ENCODE measurements at regions of chr6 and their contacts with region 1.

Region 1: DNA sequence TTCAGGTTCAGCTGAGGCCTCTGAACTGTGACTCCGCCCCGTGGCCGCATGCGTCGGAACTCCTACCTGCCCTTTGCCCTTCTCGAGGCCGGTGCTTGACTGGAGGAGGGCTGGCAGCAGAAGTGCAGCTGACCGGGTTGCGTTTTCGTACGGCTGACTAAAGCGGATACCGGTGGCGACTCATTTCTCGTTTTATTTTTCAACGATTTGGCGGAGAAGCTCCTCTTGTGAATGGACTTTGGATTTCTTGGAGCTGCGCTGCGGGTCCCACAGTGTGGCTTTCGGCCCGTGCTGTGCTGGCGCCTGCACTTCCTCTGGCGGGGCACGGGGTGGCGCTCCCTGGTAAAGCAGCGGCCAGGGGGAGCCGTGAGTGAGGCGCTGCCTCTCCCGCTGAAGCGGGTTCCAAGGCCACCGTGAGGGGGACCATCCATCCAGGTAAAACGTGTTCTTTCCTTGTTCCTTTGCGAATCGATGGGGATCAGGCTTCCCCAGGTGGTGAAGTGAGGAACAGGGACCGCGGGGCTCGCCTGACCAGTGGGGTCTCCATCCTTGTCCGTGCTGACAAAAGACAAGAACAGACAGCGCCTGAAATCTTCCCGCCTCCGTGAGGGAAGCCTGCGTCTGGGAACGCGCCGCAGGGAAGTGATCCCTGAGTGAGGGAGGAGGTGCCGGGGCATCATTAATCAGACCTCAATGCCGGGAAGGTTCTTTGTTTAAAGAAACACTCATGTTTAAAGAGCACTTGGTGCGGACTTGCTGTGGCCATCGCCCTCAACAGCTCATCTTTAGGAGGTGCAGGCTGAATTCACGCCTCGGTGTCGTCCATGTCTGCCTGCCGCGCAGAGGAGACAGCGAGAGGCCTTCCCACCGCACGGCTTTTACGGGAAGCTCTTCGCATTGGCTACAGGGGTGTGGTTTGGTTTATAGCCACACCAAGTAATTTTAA is 38.8 kb downstream of the ERMARD start:
- DNase-seq: peak; percentile 62
- H3K4me3 Mint-ChIP-seq: peak overlapping the region; percentile 84
- H3K27ac Mint-ChIP-seq: peak overlapping the region; percentile 34
- H3K4me1 Mint-ChIP-seq: peaks cover 22% of the 10 kb centered on the region
- H3K27me3 Mint-ChIP-seq: peaks cover 24% of the 10 kb centered on the region

Region 2: DNA sequence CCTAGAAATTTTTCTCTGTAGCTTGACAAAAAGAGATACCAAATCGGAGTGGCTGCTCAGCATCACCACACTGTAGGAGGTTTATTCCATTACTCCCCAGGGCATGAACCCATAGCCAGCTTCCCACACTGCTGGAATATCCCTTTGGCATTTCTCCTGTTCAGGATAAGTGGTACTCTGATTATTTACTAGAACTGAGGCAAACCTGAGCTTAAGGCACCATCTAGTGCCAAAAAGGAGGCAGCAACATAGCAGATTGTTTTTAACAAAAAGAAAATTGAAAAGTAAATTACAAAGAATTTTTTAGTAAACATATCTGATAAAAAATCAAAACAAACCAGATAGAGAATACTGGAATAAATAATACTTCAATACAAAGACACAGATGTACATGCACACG is 270.2 kb before region 1 on chr6:
- intact Hi-C with region 1: no loop called
- DNase-seq: no peak
- H3K4me3 Mint-ChIP-seq: no peak overlapping the region
- H3K27ac Mint-ChIP-seq: no peak overlapping the region
- H3K4me1 Mint-ChIP-seq: no peaks in the 10 kb centered on the region
- H3K27me3 Mint-ChIP-seq: peaks cover 9% of the 10 kb centered on the region

Region 3: DNA sequence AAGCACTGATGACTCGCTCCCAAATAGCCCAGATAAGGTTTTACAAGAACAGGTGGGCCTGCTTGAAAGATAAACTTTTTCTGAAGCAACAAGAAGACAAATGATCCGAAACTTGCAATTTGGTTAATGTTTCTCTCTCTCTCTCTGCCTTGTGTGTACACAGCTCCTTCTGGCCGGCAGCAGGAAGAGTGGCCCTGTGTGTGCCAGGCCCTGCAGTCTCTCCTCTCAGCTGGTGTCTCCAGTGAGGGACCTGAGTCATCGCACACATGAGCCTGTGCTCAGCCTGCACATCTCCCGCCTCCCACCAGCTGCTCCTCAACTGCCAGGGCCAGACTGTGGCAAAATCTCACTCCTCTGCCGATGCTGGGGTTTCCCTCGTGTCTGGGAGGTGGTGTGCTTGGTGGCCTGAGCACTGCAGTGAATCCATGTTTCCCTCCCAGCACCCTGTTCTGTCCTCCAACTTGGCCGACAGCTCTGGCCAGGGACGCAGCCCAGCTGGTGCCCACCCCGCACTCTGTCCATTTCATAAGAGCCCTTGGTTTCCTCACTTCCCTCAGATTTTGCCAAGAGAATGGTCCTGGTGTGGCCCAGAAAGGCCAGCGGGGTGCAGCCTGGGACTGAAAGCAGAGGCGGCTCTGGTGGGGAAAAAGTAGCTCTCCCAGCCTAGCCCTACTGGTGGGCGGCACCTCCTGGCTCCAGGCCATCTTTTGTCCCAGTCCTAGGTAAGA is 10.6 kb after region 1 on chr6:
- intact Hi-C with region 1: no loop called
- DNase-seq: no peak
- H3K4me3 Mint-ChIP-seq: no peak overlapping the region
- H3K27ac Mint-ChIP-seq: no peak overlapping the region
- H3K4me1 Mint-ChIP-seq: peaks cover 36% of the 10 kb centered on the region
- H3K27me3 Mint-ChIP-seq: peaks cover 44% of the 10 kb centered on the region

Region 4: GRCh38 chr6:170049641-170050561 is 259.6 kb after region 1 on chr6:
- intact Hi-C with region 1: no loop called
- DNase-seq: no peak
- H3K4me3 Mint-ChIP-seq: no peak overlapping the region
- H3K27ac Mint-ChIP-seq: no peak overlapping the region
- H3K4me1 Mint-ChIP-seq: no peaks in the 10 kb centered on the region
- H3K27me3 Mint-ChIP-seq: no peaks in the 10 kb centered on the region

Region 5: DNA sequence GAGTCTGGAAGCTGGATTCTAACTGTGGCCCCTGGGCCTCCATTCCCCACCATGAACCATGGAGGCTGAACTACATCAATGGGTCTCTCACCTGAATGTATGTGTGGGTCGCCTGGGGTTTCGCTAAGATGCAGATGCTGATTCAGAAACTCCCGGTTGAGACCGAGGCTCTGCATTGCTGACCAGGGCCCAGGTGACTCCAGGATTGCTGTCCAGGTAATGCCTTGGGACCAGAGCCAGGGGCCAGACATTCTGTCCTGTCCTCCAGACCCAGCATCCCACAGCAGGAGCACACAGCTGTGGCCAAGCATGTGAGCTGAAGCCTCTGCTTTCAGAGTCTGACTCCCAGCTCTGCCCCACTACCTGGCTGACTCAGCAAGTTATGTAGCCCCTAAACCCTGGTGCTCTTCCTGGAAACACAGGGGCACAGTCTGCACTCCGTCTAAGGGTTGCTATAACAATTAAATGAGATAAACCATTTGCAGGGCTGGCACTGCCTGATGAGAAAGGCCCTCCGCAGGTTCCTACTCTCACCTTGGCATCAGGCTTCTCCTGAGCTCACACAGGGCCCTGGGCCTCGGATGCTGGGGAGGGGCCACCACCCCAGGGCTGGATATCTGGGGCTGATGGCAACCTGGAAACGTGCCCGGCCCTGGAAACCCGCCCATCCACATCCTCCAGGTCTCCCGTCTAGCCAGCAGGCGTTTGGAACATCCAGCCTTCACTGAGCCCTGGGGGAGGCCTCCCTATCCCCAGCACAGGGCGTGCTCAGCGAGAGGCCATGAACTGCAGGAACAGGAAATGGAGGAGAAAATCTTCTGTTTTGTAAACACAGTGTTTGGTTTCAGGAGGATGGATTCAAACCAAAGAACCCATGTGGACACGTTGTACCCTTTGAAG is 325.0 kb after region 1 on chr6:
- intact Hi-C with region 1: no loop called
- DNase-seq: no peak
- H3K4me3 Mint-ChIP-seq: no peak overlapping the region
- H3K27ac Mint-ChIP-seq: no peak overlapping the region
- H3K4me1 Mint-ChIP-seq: no peaks in the 10 kb centered on the region
- H3K27me3 Mint-ChIP-seq: no peaks in the 10 kb centered on the region

Region 6: GRCh38 chr6:170291271-170292110 is 501.2 kb after region 1 on chr6:
- intact Hi-C with region 1: loop called (anchors 5 kb)
- DNase-seq: no peak
- H3K4me3 Mint-ChIP-seq: peak overlapping the region; percentile 85
- H3K27ac Mint-ChIP-seq: peak overlapping the region; percentile 75
- H3K4me1 Mint-ChIP-seq: peaks cover 50% of the 10 kb centered on the region
- H3K27me3 Mint-ChIP-seq: peaks cover 72% of the 10 kb centered on the region

Region 7: DNA sequence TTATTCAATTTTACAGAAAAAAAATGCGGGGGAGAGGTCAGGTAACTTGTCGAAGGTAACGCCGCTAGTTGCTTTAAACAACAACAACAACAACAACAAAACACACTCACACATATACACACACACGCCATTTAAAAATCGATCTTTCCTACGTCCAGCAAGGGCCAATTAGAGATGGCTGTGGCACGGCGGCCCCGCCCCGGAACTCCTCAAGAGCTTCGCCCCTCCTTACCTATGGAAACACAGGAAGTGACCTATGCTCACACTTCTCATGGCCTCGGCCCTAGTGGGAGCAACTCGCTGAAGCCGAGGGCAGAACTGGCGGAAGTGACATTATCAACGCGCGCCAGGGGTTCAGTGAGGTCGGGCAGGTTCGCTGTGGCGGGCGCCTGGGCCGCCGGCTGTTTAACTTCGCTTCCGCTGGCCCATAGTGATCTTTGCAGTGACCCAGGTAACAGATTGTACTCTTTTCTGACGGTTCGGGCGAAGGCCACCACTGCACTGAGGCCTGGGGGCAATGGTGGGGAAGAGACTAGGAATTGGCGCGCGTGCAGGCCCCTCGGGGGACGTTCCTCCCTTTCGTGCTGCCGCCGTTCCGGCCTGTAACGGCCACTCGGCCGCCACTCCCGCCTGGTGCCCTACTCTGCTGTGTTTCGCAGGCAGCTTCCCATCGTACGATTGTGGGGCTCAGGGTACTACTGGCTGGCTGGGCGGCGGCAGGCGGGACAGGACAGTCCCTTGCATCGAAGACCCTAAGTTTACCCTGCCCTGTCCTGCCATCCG is 763.9 kb after region 1 on chr6 and contains the start of gene TBP:
- intact Hi-C with region 1: loop called (anchors 1 kb)
- DNase-seq: peak; percentile 96
- H3K4me3 Mint-ChIP-seq: no peak within 1 kb of the TSS
- H3K27ac Mint-ChIP-seq: no peak within 1 kb of the TSS
- H3K4me1 Mint-ChIP-seq: peaks cover 34% of the 10 kb centered on the region
- H3K27me3 Mint-ChIP-seq: no peaks in the 10 kb centered on the region
- total RNA-seq, gene TBP: 27.8 and 29.6 TPM in 2 replicates

Measured in activated T-helper 1 cell treated with anti-CD3 and anti-CD28 coated beads, Interleukin-12 subunit alpha, Interleukin-12 subunit beta, Interleukin-2, Interleukin-4 antibody, amounts not matched to agents 30 ng/mL and 10 ng/mL and 1 ng/mL, durations not matched to agents 14 hours and 24 hours and 36 hours (primary cell).